IMR-90 (cell line): ENCODE measurements at regions of chr2 and their contacts with region 1.

Region 1: GRCh38 chr2:86623651-86624541 is at the start of gene RNF103:
- DNase-seq: peak; percentile 81
- ATAC-seq: peak; percentile 93
- H3K4me3 ChIP-seq: peak within 1 kb of the TSS; percentile 80
- H3K27ac ChIP-seq: peak within 1 kb of the TSS; percentile 68
- H3K4me1 ChIP-seq: peaks cover 2% of the 10 kb centered on the region; the same call in 1 of the 2 replicates
- H3K27me3 ChIP-seq: no peaks in the 10 kb centered on the region; the same call in 1 of the 2 replicates
- CTCF ChIP-seq: no peak
- POLR2A ChIP-seq: peak; percentile 89
- RAD21 ChIP-seq: no peak
- total RNA-seq, gene RNF103: 5.6 and 10.0 TPM in 2 replicates

Region 2: GRCh38 chr2:86476092-86476491 is 147.8 kb before region 1 on chr2:
- CTCF ChIA-PET with region 1: no interaction called
- POLR2A ChIA-PET with region 1: no interaction called
- dilution Hi-C with region 1: no loop called
- in situ Hi-C with region 1: no loop called
- intact Hi-C with region 1: loop called (anchors 5 kb)
- DNase-seq: peak; percentile 83
- ATAC-seq: peak; percentile 67
- H3K4me3 ChIP-seq: no peak overlapping the region
- H3K27ac ChIP-seq: no peak overlapping the region
- H3K4me1 ChIP-seq: peaks cover 6% of the 10 kb centered on the region; the same call in 1 of the 2 replicates
- H3K27me3 ChIP-seq: no peaks in the 10 kb centered on the region
- CTCF ChIP-seq: no peak
- POLR2A ChIP-seq: no peak
- RAD21 ChIP-seq: no peak

Region 3: DNA sequence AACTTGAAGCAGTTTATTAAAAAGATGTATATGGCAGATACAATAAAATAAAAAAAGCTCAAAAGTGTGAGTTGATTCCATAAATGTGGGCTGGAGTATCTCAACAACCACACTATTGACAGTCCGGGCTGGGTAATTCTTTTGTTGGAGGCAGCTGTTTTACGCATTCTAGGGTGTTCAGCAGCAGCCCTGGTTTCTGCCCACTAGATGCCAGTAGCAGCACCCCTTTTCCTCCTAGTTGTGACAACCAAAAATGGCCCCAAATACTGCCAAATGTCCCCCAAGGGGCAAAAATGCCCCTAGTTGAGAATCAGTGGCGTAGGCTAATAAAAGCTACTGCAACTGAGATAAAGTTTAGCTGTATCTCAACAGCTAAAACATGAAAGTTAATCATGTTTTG is 105.4 kb before region 1 on chr2:
- CTCF ChIA-PET with region 1: no interaction called
- POLR2A ChIA-PET with region 1: no interaction called
- dilution Hi-C with region 1: no loop called
- in situ Hi-C with region 1: no loop called
- intact Hi-C with region 1: loop called (anchors 5 kb)
- DNase-seq: no peak
- ATAC-seq: peak; percentile 49; the same call in 1 of the 2 replicates
- H3K4me3 ChIP-seq: no peak overlapping the region
- H3K27ac ChIP-seq: no peak overlapping the region
- H3K4me1 ChIP-seq: no peaks in the 10 kb centered on the region; the same call in 1 of the 2 replicates
- H3K27me3 ChIP-seq: no peaks in the 10 kb centered on the region
- CTCF ChIP-seq: peak; percentile 29; the same call in 1 of the 2 replicates
- POLR2A ChIP-seq: no peak
- RAD21 ChIP-seq: no peak

Region 4: DNA sequence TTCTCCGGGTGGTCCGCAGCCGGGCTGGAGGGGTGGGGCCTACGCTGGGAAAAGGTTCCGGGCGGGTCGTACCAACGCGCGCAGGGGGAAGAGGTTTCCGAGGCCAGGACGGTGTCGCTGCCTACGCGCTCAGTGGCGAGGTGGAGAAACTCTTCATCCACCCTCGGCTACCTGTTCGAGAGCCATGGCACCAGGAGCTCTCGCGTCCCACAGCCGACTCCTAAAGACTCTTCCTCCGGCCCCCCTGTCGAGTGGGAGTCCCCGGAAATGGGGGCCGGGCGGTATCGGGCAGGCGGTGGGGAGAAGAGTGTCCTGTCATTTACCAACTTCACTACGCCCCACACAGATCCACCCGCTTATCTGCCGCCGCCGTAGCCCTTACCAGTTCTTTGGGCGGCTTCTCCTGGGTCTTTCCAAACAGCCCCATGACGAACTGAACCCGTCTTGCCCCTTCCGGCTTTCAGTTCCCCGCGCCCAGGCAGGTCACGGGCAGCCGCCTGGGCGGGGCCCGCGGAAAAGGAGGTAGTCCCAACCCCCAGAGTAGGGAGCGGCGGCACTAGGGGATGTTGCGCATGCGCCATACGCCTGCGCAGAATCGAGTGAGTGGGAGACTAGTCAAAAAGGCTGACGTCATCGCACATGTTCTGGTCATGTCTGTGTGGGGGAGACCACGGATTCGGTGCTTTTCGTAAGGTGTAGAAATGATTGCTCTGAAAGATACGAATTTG is 60.8 kb before region 1 on chr2 and contains the start of gene CHMP3:
- CTCF ChIA-PET with region 1: no interaction called
- POLR2A ChIA-PET with region 1: no interaction called
- dilution Hi-C with region 1: no loop called
- in situ Hi-C with region 1: loop called (anchors 10 kb)
- intact Hi-C with region 1: loop called (anchors 2 kb)
- DNase-seq: peak; percentile 97
- ATAC-seq: peak; percentile 96
- H3K4me3 ChIP-seq: peak within 1 kb of the TSS; percentile 81
- H3K27ac ChIP-seq: peak within 1 kb of the TSS; percentile 95
- H3K4me1 ChIP-seq: peaks cover 2% of the 10 kb centered on the region
- H3K27me3 ChIP-seq: no peaks in the 10 kb centered on the region
- CTCF ChIP-seq: no peak
- POLR2A ChIP-seq: peak; percentile 93
- RAD21 ChIP-seq: no peak
- total RNA-seq, gene CHMP3: 38.4 and 81.4 TPM in 2 replicates

Region 5: GRCh38 chr2:86652116-86652515 is 28.2 kb after region 1 on chr2:
- CTCF ChIA-PET with region 1: no interaction called
- POLR2A ChIA-PET with region 1: no interaction called
- dilution Hi-C with region 1: no loop called
- in situ Hi-C with region 1: no loop called
- intact Hi-C with region 1: no loop called
- DNase-seq: no peak
- ATAC-seq: no peak
- H3K4me3 ChIP-seq: no peak overlapping the region
- H3K27ac ChIP-seq: no peak overlapping the region
- H3K4me1 ChIP-seq: no peaks in the 10 kb centered on the region
- H3K27me3 ChIP-seq: no peaks in the 10 kb centered on the region
- CTCF ChIP-seq: no peak
- POLR2A ChIP-seq: no peak
- RAD21 ChIP-seq: no peak